Sigmoid colon (tissue), 7 donors: ENCODE measurements at regions of chr6 and their contacts with region 1.

Region 1: GRCh38 chr6:119349323-119350042 is at the start of gene MAN1A1:
- DNase-seq: peak; percentile 96
- H3K4me3 ChIP-seq: peak within 1 kb of the TSS; percentile 84 to 98 (median 92)
- H3K27ac ChIP-seq: peak within 1 kb of the TSS; percentile 94 to 99 (median 98)
- H3K4me1 ChIP-seq: peaks cover 0 to 61% (median 39%) of the 10 kb centered on the region in 4 donors
- H3K27me3 ChIP-seq: no peaks in the 10 kb centered on the region
- CTCF ChIP-seq: no peak
- EP300 ChIP-seq: no peak
- POLR2A ChIP-seq: peak; percentile 69 to 87
- total RNA-seq, gene MAN1A1: 81.9 to 143 (median 107) TPM

Region 2: DNA sequence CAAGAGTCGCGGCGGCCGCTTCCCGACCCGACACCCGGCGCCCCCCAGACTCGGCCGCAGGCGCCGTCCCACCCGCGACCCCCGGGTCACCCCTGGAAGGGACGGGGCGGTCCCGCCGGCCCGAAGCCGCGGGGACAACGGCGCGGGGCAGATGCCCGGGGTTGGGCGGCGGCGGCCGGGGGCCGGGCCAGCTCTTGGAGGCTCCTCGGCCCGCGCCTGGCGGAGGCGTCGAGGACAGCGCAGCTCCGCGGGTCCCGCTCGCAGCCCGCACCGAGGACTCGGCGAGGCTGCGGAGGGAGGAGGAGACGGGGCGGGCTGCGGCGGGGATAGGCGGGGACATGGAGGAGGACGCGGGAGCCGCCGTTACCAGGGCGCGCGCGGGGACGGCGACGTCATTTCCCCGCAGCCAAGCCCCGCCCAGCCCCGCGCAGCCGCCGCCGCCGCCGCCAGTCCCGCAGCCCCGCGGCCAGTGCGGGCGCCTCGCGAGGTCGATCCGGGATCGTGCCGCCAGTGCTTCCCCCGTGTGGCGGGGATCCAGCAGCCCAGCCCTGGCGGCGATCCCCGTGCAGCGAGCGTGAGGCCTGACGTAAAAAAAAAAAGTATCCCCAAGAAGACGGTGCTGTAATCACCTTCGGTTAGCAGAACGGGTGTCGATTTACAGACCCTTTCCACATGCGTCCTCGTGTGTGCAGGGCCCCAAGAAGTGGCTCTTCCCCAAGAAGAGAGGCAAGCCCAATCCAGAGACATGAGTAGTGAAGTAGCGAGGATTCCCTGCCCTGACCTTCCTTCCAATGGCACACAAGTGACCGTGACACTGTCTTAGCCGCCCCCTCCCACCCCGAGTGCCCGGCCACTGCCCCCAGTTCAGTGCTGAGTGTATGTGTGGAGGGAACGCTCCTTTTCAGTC is 270.9 kb before region 1 on chr6 and contains the start of gene FAM184A:
- intact Hi-C with region 1: loop called (anchors 10 kb)
- DNase-seq: peak; percentile 82
- H3K4me3 ChIP-seq: peak within 1 kb of the TSS; percentile 62 to 91 (median 74)
- H3K27ac ChIP-seq: peak within 1 kb of the TSS; percentile 77 to 91 (median 84)
- H3K4me1 ChIP-seq: peaks cover 0 to 22% (median 11%) of the 10 kb centered on the region in 4 donors
- H3K27me3 ChIP-seq: no peaks in the 10 kb centered on the region
- CTCF ChIP-seq: peak in 1 of 4 experiments; percentile 28
- EP300 ChIP-seq: no peak
- POLR2A ChIP-seq: no peak
- total RNA-seq, gene FAM184A: 3.9 to 8.7 (median 5.3) TPM

Region 3: GRCh38 chr6:119158057-119158848 is 191.2 kb before region 1 on chr6:
- intact Hi-C with region 1: loop called (anchors 5 kb)
- DNase-seq: peak; percentile 90
- H3K4me3 ChIP-seq: no peak overlapping the region
- H3K27ac ChIP-seq: peak overlapping the region in 2 of 4 donors; percentile 12 to 25
- H3K4me1 ChIP-seq: peaks cover 0 to 31% (median 27%) of the 10 kb centered on the region in 4 donors
- H3K27me3 ChIP-seq: no peaks in the 10 kb centered on the region
- CTCF ChIP-seq: no peak
- EP300 ChIP-seq: no peak
- POLR2A ChIP-seq: no peak

Region 4: GRCh38 chr6:119395192-119395591 is 45.7 kb after region 1 on chr6:
- intact Hi-C with region 1: no loop called
- DNase-seq: no peak
- H3K4me3 ChIP-seq: no peak overlapping the region
- H3K27ac ChIP-seq: no peak overlapping the region
- H3K4me1 ChIP-seq: no peaks in the 10 kb centered on the region
- H3K27me3 ChIP-seq: no peaks in the 10 kb centered on the region
- CTCF ChIP-seq: no peak
- EP300 ChIP-seq: no peak
- POLR2A ChIP-seq: no peak

Region 5: GRCh38 chr6:119742188-119742803 is 392.8 kb after region 1 on chr6:
- intact Hi-C with region 1: loop called (anchors 5 kb)
- DNase-seq: no peak
- H3K4me3 ChIP-seq: no peak overlapping the region
- H3K27ac ChIP-seq: no peak overlapping the region
- H3K4me1 ChIP-seq: peaks cover 0 to 12% (median 4%) of the 10 kb centered on the region in 4 donors
- H3K27me3 ChIP-seq: no peaks in the 10 kb centered on the region
- CTCF ChIP-seq: peak in 3 of 4 experiments; percentile 37 to 72 (median 62)
- EP300 ChIP-seq: no peak
- POLR2A ChIP-seq: no peak